Upper lobe of right lung (tissue), 1 donor: ENCODE measurements at regions of chr3 and their contacts with region 1.

Region 1: DNA sequence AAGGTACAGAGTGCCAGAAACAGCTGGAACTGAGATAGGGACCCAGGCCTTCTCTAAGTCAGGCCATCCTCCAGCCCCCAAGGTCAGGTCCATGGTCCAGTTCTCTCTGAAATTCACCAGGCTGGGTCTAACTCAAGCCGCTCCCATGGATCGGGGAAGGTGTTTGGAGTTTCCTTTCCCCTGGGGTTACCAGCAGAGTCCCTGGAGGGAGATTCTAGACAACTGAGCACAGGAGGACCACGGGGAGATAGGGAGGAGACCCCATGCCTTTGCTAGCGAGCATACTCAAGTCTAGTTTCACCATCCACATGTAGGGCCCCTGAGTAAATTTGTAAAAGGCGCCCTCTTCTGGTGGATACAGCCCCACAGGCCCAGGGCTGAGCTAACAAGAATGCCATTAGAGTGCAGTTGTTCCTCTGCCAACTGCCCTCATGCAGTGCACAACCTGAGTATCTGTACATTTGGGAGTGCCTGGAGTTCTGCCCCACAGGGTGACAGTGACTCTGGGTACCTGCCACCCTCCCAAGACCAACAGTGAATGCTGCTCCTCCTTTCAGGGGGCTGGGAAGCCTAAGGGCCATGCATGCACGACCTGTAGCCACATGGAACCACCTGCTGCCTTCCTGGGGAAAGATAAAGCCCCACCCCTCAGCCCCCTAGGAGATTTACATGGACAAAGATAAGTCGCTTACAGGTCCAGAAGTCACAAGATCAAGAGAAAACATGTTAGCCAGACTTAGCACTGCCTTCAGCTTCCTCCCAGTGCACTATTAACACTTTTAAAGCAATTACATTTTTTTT is 89.0 kb downstream of the IQSEC1 start:
- DNase-seq: no peak
- ATAC-seq: peak; percentile 90
- H3K4me3 ChIP-seq: no peak overlapping the region
- H3K27ac ChIP-seq: no peak overlapping the region
- H3K4me1 ChIP-seq: no peaks in the 10 kb centered on the region
- H3K27me3 ChIP-seq: no peaks in the 10 kb centered on the region
- CTCF ChIP-seq: peak; percentile 80

Region 2: GRCh38 chr3:12875857-12876836 is 108.1 kb before region 1 on chr3:
- intact Hi-C with region 1: loop called (anchors 10 kb)
- DNase-seq: no peak
- ATAC-seq: peak; percentile 70
- H3K4me3 ChIP-seq: peak overlapping the region; percentile 21
- H3K27ac ChIP-seq: no peak overlapping the region
- H3K4me1 ChIP-seq: no peaks in the 10 kb centered on the region
- H3K27me3 ChIP-seq: peaks cover 14% of the 10 kb centered on the region
- CTCF ChIP-seq: peak; percentile 11

Region 3: GRCh38 chr3:13077431-13078162 is 93.4 kb after region 1 on chr3:
- intact Hi-C with region 1: no loop called
- DNase-seq: no peak
- ATAC-seq: no peak
- H3K4me3 ChIP-seq: no peak overlapping the region
- H3K27ac ChIP-seq: no peak overlapping the region
- H3K4me1 ChIP-seq: peaks cover 4% of the 10 kb centered on the region
- H3K27me3 ChIP-seq: peaks cover 25% of the 10 kb centered on the region
- CTCF ChIP-seq: no peak

Region 4: GRCh38 chr3:13584427-13585300 is 600.4 kb after region 1 on chr3:
- intact Hi-C with region 1: no loop called
- DNase-seq: no peak
- ATAC-seq: no peak
- H3K4me3 ChIP-seq: no peak overlapping the region
- H3K27ac ChIP-seq: no peak overlapping the region
- H3K4me1 ChIP-seq: peaks cover 7% of the 10 kb centered on the region
- H3K27me3 ChIP-seq: no peaks in the 10 kb centered on the region
- CTCF ChIP-seq: no peak